ENCODE measurements at regions of chr20 and their contacts with region 1.

Region 1: DNA sequence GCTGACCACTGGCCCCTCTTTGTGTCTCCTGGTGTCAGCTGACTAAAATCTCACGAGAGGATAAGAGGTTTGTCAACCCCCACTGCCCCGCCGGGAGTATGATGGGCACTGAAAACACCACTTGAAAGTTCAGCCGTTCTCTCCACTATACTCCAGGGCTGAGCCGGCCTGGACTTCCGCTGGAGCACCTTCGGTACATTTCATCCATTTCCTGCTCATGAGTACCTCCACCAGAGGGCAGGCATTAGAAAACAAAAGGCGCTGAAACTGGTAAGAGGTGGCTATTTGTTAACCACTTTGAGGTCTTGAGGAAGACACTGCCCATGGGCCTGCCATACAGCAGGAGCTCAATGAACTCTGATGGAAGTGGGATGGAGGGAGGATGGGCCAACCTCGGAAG is 17.9 kb upstream of the ANKRD60 start:
- DNase-seq: peak; percentile 30
- ATAC-seq: peak; percentile 79
- H3K4me3 Mint-ChIP-seq: no peak overlapping the region
- H3K27ac Mint-ChIP-seq: peak overlapping the region; percentile 87
- H3K4me1 Mint-ChIP-seq: peaks cover 10% of the 10 kb centered on the region
- H3K27me3 Mint-ChIP-seq: no peaks in the 10 kb centered on the region
- CTCF ChIP-seq: no peak

Region 2: DNA sequence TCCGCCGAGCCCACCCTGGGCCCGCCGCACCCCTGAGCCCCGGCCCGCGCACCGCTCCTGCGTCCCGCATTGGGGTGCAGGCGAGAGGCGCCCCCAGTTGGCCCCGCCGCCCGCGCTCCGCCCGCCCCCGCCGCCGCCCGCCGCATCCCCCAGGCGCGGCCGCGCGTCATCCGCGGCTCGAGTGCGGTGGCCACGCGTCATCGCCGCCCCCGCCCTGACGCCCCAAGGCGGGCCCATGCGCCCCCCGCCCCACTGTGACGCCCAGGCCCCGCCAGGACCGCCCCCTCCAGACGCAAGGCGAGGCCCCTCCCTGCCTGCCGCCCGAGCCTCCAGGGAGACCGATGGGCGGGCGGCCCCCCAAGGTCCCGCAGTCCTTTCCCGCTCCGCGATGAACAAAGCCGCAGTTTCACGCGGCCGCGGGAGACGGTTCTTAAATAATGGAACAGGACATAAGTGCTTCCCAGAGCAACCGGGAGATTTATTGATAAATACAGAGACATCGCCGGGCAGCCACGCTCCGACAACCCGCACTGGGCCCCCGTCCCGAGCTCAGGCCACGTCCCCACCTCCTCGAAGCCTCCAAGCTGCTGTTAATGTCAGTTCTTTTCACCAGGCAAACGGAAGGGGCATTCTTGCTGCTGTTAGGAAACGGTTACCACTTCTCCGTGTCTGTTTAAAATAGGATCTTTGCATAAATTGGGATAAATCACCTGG is 17.7 kb before region 1 on chr20 and contains the start of gene ANKRD60:
- CTCF ChIA-PET with region 1: interaction called, 12 read pairs
- POLR2A ChIA-PET with region 1: no interaction called
- DNase-seq: peak; percentile 76
- ATAC-seq: peak; percentile 80
- H3K4me3 Mint-ChIP-seq: peak within 1 kb of the TSS; percentile 78
- H3K27ac Mint-ChIP-seq: peak within 1 kb of the TSS; percentile 99
- H3K4me1 Mint-ChIP-seq: peaks cover 22% of the 10 kb centered on the region
- H3K27me3 Mint-ChIP-seq: peaks cover 24% of the 10 kb centered on the region
- CTCF ChIP-seq: no peak
- total RNA-seq, gene ANKRD60: not detected in 3 replicates

Region 3: GRCh38 chr20:58359442-58359841 is 113.1 kb after region 1 on chr20:
- CTCF ChIA-PET with region 1: interaction called, 16 read pairs
- POLR2A ChIA-PET with region 1: interaction called, 6 read pairs
- DNase-seq: peak; percentile 43
- ATAC-seq: peak; percentile 16; the same call in 1 of the 2 replicates
- H3K4me3 Mint-ChIP-seq: no peak overlapping the region
- H3K27ac Mint-ChIP-seq: no peak overlapping the region
- H3K4me1 Mint-ChIP-seq: no peaks in the 10 kb centered on the region
- H3K27me3 Mint-ChIP-seq: no peaks in the 10 kb centered on the region
- CTCF ChIP-seq: no peak

Region 4: DNA sequence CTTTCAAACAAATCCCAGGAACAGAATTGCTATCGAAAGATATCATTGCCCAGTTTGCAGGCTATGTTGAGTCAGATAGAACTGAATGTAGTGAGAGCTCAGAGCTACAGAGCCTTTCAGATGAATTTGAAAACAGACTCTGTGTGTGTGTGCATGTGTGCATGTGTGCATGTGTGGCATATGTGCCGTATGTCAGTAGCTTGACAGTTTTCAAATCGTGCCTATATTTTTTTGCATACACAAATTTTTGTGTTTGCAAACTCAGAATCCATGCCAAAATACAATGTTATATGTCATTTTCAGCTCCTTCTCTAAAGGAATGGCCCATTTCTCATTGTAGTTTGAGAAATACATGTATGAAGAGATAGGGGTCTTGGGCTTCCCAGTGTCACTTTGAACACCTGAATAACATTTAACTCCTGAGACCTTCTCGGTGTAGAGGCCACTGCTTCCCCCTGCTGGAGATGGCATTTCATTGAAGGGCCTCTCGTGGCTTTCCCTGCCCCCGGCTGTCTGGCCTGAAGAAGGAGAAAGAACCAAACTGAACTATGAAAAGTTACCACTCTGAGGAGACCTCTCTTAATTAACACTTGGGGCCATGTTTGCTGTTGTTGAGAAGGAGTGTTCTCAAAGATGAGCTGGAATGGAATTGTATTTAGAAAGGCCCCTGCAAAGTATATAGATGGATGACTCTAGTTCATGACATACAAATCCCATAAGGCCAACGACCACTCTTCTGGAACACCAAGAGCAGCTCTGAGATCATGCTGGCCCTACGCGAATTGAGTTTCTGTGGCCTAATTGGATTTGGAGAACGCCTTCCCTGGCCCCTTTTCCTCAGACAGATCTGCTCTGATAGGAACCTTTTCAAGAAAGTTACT is 201.4 kb after region 1 on chr20:
- CTCF ChIA-PET with region 1: interaction called, 25 read pairs
- POLR2A ChIA-PET with region 1: no interaction called
- DNase-seq: peak; percentile 70
- ATAC-seq: peak; percentile 88
- H3K4me3 Mint-ChIP-seq: no peak overlapping the region
- H3K27ac Mint-ChIP-seq: peak overlapping the region; percentile 16; the same call in 1 of the 2 replicates
- H3K4me1 Mint-ChIP-seq: peaks cover 27% of the 10 kb centered on the region
- H3K27me3 Mint-ChIP-seq: no peaks in the 10 kb centered on the region
- CTCF ChIP-seq: peak; percentile 53

Measured in WTC11 (cell line).